Esophagus squamous epithelium (tissue), 5 donors: ENCODE measurements at regions of chr17 and their contacts with region 1.

Region 1: DNA sequence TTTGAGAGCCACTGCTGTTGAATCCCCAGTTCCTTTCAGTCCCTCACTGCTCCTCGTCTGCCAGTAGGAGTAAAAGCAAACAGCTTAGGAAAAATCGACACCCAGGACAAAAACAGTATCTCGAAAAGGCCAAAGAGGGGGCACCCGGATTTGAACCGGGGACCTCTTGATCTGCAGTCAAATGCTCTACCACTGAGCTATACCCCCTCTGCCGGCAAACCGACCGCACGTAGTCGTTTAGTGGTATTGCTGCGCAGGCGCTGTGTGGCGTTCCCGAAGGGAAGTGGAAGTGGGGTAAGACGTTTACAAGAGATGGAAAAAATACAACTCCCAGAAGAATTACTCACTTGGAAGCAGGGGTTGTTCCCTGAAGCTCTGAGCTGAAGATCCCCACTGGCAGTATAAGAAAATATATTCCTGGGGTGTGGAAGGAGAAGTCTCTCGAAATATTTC is 2.2 kb upstream of the PLXDC1 start:
- DNase-seq: peak; percentile 27
- H3K4me3 ChIP-seq: peak overlapping the region; percentile 61 to 91 (median 80)
- H3K27ac ChIP-seq: peak overlapping the region; percentile 83 to 93 (median 92)
- H3K4me1 ChIP-seq: peaks cover 10 to 49% (median 18%) of the 10 kb centered on the region in 3 donors
- H3K27me3 ChIP-seq: peaks cover 0 to 20% (median 0%) of the 10 kb centered on the region in 4 donors
- CTCF ChIP-seq: peak in 4 of 6 experiments; percentile 18 to 37 (median 26)
- POLR2A ChIP-seq: no peak

Region 2: DNA sequence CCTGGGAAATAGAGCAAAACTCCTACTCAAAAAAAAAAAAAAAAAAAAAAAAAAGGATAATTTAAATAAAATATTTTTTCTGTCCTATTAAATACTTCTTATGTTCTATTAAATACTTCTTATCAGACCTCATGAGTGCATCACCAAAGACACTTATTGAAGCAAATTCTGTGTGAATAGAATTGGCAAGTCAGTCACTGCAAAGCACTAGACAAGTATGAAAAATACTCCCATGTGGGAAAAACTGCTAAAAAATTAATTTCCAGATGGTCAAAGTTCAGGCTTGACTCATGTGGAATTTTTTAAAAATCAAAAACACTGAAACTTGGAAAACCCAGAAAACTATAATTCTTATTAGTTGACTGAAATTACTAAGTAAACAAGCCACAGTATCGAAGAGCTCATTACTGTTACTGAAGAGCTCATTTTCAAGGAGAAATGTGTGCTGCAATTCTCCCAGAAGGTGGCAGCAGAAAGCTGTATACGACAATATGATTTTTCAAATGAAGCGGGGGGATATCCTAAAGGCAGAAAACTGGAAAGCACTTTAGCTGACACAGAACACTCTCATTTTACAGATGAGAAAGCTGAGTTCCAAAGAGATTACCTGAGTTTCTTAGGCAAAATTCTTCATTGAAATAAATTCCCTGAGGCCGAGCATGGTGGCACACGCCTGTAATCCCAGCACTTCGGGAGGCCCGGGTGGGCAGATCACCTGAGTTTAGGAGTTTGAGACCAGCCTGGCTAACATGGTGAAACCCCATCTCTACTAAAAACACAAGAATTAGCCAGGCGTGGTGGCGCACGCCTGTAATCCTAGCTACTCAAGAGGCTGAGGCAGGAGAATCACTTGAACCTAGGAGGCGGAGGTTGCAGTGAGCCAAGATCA is 170.5 kb before region 1 on chr17:
- intact Hi-C with region 1: loop called (anchors 5 kb)
- DNase-seq: no peak
- H3K4me3 ChIP-seq: no peak overlapping the region
- H3K27ac ChIP-seq: no peak overlapping the region
- H3K4me1 ChIP-seq: peaks cover 0 to 27% (median 0%) of the 10 kb centered on the region in 3 donors
- H3K27me3 ChIP-seq: no peaks in the 10 kb centered on the region
- CTCF ChIP-seq: peak; percentile 67 to 84 (median 78)
- POLR2A ChIP-seq: no peak

Region 3: DNA sequence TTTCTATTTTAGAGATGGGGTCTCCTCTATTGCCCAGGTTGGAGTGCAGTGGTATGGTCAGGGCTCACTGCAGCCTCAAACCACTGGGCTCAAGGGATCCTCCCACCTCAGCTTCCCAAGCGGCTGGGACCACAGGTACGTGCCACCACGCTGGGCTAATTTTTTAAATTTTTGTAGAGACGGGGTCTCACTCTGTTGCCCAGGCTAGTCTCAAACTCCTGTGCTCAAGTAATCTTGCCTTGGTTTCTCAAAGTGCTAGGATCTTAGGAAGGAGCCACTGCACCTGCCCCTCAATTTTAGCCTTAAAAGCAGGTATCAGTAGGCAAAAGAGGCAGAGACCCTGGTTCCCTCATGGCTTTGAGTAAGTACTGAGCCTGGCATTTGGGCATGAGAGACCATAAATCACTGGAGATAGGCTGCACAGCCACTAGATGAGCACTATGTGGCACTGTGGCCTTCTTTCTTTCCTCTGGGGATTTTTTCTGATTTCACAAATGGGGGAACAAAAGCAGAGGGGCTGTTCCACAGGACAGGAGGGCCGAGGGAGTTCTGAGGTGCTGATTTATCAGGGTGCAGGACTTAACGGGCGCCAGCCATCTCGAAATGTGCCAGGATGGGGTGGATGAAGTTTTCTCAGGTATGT is 84.4 kb before region 1 on chr17:
- intact Hi-C with region 1: loop called (anchors 5 kb)
- DNase-seq: no peak
- H3K4me3 ChIP-seq: no peak overlapping the region
- H3K27ac ChIP-seq: peak overlapping the region in 1 of 4 donors; percentile 13
- H3K4me1 ChIP-seq: peaks cover 0 to 43% (median 6%) of the 10 kb centered on the region in 3 donors
- H3K27me3 ChIP-seq: no peaks in the 10 kb centered on the region
- CTCF ChIP-seq: peak; percentile 36 to 61 (median 50)
- POLR2A ChIP-seq: no peak

Region 4: DNA sequence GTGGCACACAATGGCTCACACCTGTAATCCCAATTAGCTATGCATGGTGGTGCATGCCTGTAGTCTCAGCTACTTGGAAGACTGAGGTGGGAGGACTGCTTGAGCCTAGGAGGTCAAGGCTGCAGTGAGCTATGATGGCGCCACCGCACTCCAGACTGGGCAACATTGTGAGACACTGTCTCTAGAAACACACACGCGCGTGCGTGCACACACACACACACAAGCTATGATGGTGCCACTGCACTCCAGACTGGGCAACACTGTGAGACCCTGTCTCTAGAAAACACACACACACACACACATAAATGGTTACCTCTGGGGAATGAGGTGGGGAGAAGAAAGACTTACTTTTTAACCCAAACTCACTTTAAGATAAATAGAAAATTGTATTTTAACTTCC is 231.4 kb after region 1 on chr17:
- intact Hi-C with region 1: no loop called
- DNase-seq: no peak
- H3K4me3 ChIP-seq: no peak overlapping the region
- H3K27ac ChIP-seq: no peak overlapping the region
- H3K4me1 ChIP-seq: peaks cover 0 to 6% (median 0%) of the 10 kb centered on the region in 3 donors
- H3K27me3 ChIP-seq: no peaks in the 10 kb centered on the region
- CTCF ChIP-seq: no peak
- POLR2A ChIP-seq: no peak